Activated CD4-positive, alpha-beta T cell treated with anti-CD3 and anti-CD28 coated beads, Interleukin-2, amount 10 ng/mL, durations not matched to agents 7 days and 5 days (primary cell): ENCODE measurements at regions of chr2 and their contacts with region 1.

Region 1: GRCh38 chr2:149017116-149017985 is 21.1 kb upstream of the LYPD6B start:
- DNase-seq: peak; percentile 84
- H3K4me3 Mint-ChIP-seq: no peak overlapping the region
- H3K27ac Mint-ChIP-seq: no peak overlapping the region
- H3K4me1 Mint-ChIP-seq: peaks cover 1% of the 10 kb centered on the region
- H3K27me3 Mint-ChIP-seq: no peaks in the 10 kb centered on the region

Region 2: GRCh38 chr2:148989882-148990493 is 27.4 kb before region 1 on chr2:
- CTCF ChIA-PET with region 1: no interaction called
- POLR2A ChIA-PET with region 1: no interaction called
- DNase-seq: peak; percentile 73
- H3K4me3 Mint-ChIP-seq: no peak overlapping the region
- H3K27ac Mint-ChIP-seq: no peak overlapping the region
- H3K4me1 Mint-ChIP-seq: no peaks in the 10 kb centered on the region
- H3K27me3 Mint-ChIP-seq: no peaks in the 10 kb centered on the region

Region 3: GRCh38 chr2:149031396-149031795 is 14.0 kb after region 1 on chr2:
- CTCF ChIA-PET with region 1: interaction called, 11 read pairs
- POLR2A ChIA-PET with region 1: no interaction called
- DNase-seq: no peak
- H3K4me3 Mint-ChIP-seq: no peak overlapping the region
- H3K27ac Mint-ChIP-seq: no peak overlapping the region
- H3K4me1 Mint-ChIP-seq: peaks cover 7% of the 10 kb centered on the region
- H3K27me3 Mint-ChIP-seq: peaks cover 10% of the 10 kb centered on the region

Region 4: DNA sequence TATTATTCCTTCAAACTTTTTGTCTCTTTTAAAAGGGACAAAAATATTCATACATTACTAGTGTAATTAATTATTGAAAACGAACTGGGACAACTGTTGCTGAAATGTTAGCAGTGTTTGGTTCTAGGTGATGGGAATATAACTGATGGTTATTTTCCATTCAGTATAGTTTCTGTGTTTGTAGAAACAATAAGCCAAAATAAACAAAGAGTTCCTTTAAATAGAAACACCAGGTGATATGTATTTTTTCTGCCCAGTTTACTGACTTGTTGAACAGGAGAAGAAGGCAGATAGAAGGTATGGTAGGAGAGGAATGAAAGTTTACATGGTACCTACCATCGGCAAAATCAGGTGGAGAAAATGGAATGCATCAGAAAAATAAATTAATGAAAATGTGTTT is 95.4 kb after region 1 on chr2:
- CTCF ChIA-PET with region 1: no interaction called
- POLR2A ChIA-PET with region 1: no interaction called
- DNase-seq: no peak
- H3K4me3 Mint-ChIP-seq: no peak overlapping the region
- H3K27ac Mint-ChIP-seq: no peak overlapping the region
- H3K4me1 Mint-ChIP-seq: no peaks in the 10 kb centered on the region
- H3K27me3 Mint-ChIP-seq: peaks cover 22% of the 10 kb centered on the region

Region 5: DNA sequence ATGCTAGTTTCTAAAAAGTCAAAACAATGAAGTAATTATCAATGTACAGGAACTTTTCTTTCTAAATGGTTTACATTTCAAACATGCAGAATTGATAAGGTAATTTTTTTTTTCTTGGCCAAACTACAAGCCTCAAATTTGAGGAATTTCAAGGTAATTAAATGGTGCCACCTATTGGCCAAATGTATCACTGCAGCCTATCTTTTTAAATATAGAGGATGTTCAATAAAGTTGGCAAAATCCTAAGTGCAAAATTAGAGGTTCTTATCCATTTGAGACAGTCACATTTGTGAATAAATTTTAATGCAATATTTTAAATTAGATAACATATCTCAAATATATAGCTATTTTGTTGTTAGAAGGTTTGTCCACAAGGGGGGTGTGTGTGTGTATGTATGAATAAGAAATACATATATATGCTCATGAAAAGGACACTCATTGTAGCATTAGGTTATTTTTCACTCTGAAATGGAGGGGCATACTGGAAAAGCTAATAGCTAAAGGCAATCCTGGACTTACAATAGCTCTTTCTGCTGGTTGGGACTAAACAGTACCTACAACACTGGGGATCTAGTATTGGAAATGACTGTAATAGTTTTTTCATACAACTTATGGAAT is 544.1 kb after region 1 on chr2:
- CTCF ChIA-PET with region 1: interaction called, 10 read pairs
- POLR2A ChIA-PET with region 1: no interaction called
- DNase-seq: peak; percentile 50
- H3K4me3 Mint-ChIP-seq: no peak overlapping the region
- H3K27ac Mint-ChIP-seq: no peak overlapping the region
- H3K4me1 Mint-ChIP-seq: no peaks in the 10 kb centered on the region
- H3K27me3 Mint-ChIP-seq: peaks cover 1% of the 10 kb centered on the region